ENCODE measurements at regions of chr9 and their contacts with region 1.

Region 1: DNA sequence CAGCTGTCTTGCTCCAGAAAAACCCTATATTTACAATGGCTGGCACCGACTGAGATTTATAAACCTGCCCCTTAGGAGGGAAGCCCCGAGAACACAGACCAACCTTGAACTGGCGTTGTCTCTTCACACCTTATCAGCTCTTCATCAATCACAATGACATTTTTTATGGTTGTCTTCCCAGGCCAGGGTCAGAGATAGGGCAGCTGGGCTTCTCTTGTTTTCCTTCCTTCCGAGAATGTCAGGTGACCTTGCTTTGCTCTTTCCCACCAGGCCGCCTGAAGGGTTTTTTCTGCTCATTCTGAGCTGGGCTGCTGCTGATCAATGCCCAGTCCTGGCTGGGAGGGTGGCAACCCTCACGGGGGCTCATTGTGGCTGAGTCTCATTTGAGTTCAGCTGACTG is 619.1 kb downstream of the CCDC171 start:
- DNase-seq: no peak
- H3K4me3 ChIP-seq: no peak overlapping the region
- H3K27ac ChIP-seq: no peak overlapping the region
- H3K4me1 ChIP-seq: no peaks in the 10 kb centered on the region
- H3K27me3 ChIP-seq: no peaks in the 10 kb centered on the region
- CTCF ChIP-seq: no peak
- EP300 ChIP-seq: no peak
- POLR2A ChIP-seq: no peak
- RAD21 ChIP-seq: no peak

Region 2: GRCh38 chr9:16154521-16155078 is 17.3 kb before region 1 on chr9:
- CTCF ChIA-PET with region 1: interaction called, 10 read pairs
- POLR2A ChIA-PET with region 1: interaction called, 7 read pairs
- DNase-seq: peak; percentile 36 to 82
- H3K4me3 ChIP-seq: peak overlapping the region in 3 of 4 experiments; percentile 18 to 50 (median 23); a peak in 6 of 8 replicates
- H3K27ac ChIP-seq: no peak overlapping the region
- H3K4me1 ChIP-seq: peaks cover 0 to 3% (median 1%) of the 10 kb centered on the region in 4 experiments; a peak in 5 of 7 replicates
- H3K27me3 ChIP-seq: peaks cover 0 to 16% (median 6%) of the 10 kb centered on the region in 4 experiments; a peak in 5 of 7 replicates
- CTCF ChIP-seq: peak; percentile 59 to 70 (median 60)
- EP300 ChIP-seq: no peak
- POLR2A ChIP-seq: no peak
- RAD21 ChIP-seq: peak; percentile 48 to 67

Region 3: DNA sequence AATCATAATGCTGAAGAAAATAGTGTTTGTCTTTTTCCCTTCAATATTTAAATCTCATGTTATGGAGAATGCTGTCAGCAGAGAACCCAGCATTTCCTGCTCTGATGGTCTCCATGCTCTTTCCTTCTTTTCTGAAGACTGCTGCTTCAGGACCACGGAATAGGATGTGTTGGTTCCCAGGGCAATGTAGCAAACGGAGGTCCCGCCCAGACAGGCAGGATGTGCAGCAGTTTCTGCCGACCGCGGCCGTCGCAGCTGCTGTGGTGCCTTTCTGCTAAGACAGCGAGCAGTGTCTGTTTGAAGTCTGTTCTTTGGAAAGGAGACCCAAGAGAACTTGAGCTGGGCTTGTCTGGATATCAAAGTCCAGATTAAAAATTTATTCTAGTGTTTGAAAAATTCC is 35.2 kb after region 1 on chr9:
- CTCF ChIA-PET with region 1: no interaction called
- POLR2A ChIA-PET with region 1: no interaction called
- DNase-seq: no peak
- H3K4me3 ChIP-seq: no peak overlapping the region
- H3K27ac ChIP-seq: no peak overlapping the region
- H3K4me1 ChIP-seq: 0 out of 7 replicates have a peak, but pooled peaks cover 0 to 2% (median 0%) of the 10 kb centered on the region in 4 experiments
- H3K27me3 ChIP-seq: no peaks in the 10 kb centered on the region
- CTCF ChIP-seq: no peak
- EP300 ChIP-seq: no peak
- POLR2A ChIP-seq: no peak
- RAD21 ChIP-seq: no peak